Activated naive CD4-positive, alpha-beta T cell treated with anti-CD3 and anti-CD28 coated beads for 36 hours (primary cell): ENCODE measurements at regions of chr2 and their contacts with region 1.

Region 1: DNA sequence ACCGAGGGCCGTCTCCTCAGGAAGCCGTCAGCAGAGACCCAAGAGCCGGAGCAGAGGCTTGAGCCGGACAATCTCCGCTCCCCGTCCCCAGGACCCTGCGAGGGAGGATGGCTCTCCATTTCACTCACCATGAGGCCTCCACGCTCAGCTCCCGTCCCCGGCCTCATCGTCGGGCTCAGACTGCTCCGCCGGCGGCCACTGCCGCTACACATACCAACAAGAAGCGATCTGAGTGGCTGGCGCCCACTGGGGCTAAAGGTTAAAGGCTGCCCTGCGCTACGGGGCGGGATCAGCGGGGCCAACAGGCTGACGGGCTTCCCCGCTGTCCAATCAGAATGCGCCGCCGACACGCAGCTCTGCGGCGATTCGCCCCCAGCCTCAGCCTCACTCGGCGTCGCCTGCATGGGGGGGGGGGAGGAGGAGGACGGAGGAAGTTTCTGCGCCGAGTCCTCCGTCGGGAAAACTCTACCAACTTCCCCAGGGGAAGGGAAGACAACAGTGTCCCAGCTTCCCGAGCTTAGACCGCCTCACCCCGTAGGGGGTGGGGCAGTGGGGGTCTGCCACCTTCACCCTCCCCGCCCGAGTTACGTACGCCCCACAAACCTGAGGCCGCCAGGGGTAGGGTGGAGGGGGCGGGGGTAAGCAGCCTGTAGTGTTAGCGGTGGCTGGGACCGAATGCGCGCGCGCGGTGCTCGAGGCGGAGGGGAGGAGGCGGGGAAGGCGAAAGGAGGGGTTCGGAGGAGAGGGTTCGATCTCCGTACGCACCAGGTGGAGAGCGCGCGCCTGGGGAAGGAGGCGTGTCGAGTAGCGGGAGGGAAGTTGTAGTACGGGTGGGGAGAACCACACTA is at the start of gene PRPF40A:
- DNase-seq: peak; percentile 98
- H3K4me3 Mint-ChIP-seq: peak within 1 kb of the TSS; percentile 100
- H3K27ac Mint-ChIP-seq: peak within 1 kb of the TSS; percentile 99
- H3K4me1 Mint-ChIP-seq: peaks cover 52% of the 10 kb centered on the region
- H3K27me3 Mint-ChIP-seq: no peaks in the 10 kb centered on the region
- total RNA-seq, gene PRPF40A: 123 to 128 TPM

Region 2: DNA sequence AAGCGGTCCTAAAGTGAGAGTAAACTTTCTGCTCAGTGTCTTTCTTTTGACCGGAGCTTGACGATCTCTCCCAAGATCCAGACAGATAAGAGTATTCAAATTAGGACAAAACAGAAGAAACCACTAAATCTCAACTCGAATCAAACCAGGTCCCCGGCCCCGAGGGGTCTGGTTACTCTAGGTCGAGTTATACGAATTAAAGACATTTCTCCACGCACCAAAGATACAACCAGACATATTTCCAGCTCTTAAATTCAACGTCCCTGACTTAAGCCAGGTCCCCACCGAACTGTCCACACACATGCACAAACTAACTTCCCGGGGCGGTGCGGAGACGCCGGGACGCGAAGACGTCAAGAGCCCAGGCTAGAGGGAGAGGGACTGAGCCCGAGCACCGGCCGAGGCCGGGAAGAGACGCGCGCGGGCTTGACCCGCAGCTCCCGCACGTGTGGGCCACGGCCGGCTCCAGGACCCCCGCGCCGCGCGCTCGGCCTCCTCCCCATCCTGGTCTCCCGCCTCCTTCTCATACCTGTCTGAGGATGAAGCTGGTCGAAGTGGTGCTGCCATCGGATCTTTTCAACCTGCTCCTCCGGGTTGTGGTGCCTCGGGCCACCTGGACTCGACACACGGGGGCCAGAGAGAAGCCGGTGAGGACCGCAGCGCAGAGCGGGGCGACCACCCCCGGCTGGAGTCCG is 619.5 kb before region 1 on chr2:
- CTCF ChIA-PET with region 1: no interaction called
- intact Hi-C with region 1: loop called (anchors 5 kb)
- DNase-seq: no peak
- H3K4me3 Mint-ChIP-seq: peak overlapping the region; percentile 78
- H3K27ac Mint-ChIP-seq: no peak overlapping the region
- H3K4me1 Mint-ChIP-seq: peaks cover 13% of the 10 kb centered on the region
- H3K27me3 Mint-ChIP-seq: peaks cover 38% of the 10 kb centered on the region

Region 3: GRCh38 chr2:152421521-152422370 is 295.7 kb before region 1 on chr2:
- CTCF ChIA-PET with region 1: no interaction called
- intact Hi-C with region 1: loop called (anchors 5 kb)
- DNase-seq: peak; percentile 43
- H3K4me3 Mint-ChIP-seq: no peak overlapping the region
- H3K27ac Mint-ChIP-seq: peak overlapping the region; percentile 32
- H3K4me1 Mint-ChIP-seq: peaks cover 29% of the 10 kb centered on the region
- H3K27me3 Mint-ChIP-seq: peaks cover 19% of the 10 kb centered on the region

Region 4: DNA sequence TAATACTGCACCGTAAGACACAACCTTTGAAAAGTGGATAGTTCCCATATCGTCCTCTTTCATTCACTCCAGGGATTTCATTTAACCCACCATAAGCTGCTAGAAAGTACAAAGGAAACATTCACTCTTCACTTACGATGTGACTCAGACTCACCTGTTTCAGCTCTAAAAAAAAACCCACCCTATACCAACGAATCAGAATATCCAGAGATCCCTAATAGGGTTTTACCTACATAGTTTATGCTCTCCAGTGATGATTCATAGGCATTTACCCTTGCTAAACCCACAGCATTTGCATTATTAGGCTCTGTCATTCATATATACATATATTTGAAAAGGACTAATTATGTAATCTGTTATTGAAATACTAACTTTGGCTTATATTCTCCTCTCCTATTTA is 60.4 kb before region 1 on chr2:
- CTCF ChIA-PET with region 1: no interaction called
- intact Hi-C with region 1: loop called (anchors 1 kb)
- DNase-seq: no peak
- H3K4me3 Mint-ChIP-seq: no peak overlapping the region
- H3K27ac Mint-ChIP-seq: peak overlapping the region; percentile 28
- H3K4me1 Mint-ChIP-seq: peaks cover 20% of the 10 kb centered on the region
- H3K27me3 Mint-ChIP-seq: no peaks in the 10 kb centered on the region

Region 5: DNA sequence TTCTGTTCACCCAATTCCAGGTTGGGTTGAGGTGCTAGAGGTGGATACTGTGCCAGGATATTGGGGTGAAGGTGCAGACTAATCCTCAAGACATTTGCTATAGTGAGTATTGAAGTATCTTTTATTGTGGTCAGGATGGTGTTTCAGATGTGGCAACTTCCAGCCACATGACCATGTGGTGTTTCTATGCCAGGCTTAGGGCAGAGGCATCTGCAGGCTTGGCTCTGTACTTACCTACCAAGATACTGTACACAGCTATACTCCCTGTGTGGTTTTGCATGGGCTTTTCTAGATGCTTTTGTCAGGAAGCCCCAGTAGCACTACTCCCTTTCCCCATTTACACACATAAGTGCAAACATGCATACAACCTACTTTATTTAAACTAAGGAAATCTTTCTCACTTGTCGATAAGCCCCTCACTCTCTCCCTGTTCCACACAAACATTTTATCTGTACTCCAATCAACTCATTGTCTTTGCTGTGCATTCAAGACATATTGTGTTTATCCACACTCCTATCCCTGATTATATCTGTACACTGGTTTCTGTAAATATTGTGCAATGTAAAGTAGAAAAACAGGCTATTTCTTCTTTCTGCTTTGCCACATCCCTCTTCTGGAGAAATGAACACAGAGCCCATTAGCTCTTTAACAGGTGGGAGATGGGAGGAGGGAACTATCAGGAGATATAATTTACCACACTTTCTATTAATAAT is 13.3 kb after region 1 on chr2:
- CTCF ChIA-PET with region 1: no interaction called
- intact Hi-C with region 1: loop called (anchors 1 kb)
- DNase-seq: peak; percentile 18
- H3K4me3 Mint-ChIP-seq: no peak overlapping the region
- H3K27ac Mint-ChIP-seq: no peak overlapping the region
- H3K4me1 Mint-ChIP-seq: peaks cover 18% of the 10 kb centered on the region
- H3K27me3 Mint-ChIP-seq: no peaks in the 10 kb centered on the region

Region 6: GRCh38 chr2:152762202-152762601 is 44.8 kb after region 1 on chr2:
- CTCF ChIA-PET with region 1: no interaction called
- intact Hi-C with region 1: no loop called
- DNase-seq: no peak
- H3K4me3 Mint-ChIP-seq: no peak overlapping the region
- H3K27ac Mint-ChIP-seq: no peak overlapping the region
- H3K4me1 Mint-ChIP-seq: peaks cover 4% of the 10 kb centered on the region
- H3K27me3 Mint-ChIP-seq: no peaks in the 10 kb centered on the region